ENCODE measurements at regions of chr20 and their contacts with region 1.

Region 1: GRCh38 chr20:63739130-63740069 is at the start of gene SLC2A4RG:
- DNase-seq: peak; percentile 89
- total RNA-seq, gene SLC2A4RG: 67.8 TPM

Region 2: DNA sequence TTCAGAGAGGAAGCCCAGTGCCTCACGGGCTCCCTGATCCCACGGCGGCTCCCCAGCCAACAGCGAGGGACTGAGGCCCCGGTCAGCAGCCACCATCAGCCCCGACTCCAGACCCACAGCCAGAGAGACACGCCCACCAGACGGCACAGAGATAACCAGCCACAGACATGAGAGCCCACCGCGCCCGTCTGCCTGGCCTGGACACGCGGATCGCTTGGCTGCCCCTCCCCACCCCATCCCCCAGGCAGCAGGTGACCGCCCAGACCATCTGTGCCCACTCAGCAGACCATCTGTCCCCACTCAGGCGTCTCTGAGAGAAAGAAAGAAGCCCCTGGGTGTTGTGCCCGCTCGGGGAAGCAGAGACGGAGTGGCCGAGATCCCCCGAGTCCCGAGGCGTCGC is 322.8 kb before region 1 on chr20:
- intact Hi-C with region 1: no loop called
- DNase-seq: no peak

Region 3: DNA sequence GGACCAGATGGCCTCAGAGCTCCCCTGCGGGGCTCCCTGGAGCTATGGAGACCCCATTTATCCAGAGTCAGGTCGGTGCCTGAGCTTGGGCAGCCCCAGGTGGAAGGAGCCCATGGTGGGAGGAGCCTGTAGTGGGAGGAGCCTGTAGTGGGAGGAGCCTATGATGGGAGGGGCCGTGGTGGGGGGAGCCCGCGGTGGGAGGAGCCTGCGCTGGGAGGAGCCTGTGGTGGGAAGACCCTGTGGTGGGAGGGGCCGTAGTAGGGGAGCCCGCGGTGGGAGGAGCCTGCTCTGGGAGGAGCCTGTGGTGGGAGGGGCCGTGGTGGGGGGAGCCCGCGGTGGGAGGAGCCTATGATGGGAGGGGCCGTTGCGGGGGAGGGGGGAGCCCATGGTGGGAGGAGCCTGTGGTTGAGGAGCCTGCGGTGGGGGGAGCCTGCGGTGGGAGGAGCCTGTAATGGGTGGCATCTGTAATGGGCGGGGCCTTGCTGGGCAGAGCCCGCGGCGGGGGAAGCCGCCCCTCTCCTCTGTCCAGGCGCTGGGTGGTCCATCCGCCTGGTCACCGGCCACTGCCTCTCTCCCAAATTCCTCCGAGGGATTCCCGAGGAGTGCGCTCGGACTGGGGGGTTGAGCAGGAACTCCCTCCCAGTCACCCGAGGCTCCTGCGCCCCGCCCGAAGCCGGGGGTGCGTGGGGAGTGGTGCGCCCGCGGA is 186.0 kb before region 1 on chr20:
- intact Hi-C with region 1: no loop called
- DNase-seq: peak; percentile 89

Region 4: DNA sequence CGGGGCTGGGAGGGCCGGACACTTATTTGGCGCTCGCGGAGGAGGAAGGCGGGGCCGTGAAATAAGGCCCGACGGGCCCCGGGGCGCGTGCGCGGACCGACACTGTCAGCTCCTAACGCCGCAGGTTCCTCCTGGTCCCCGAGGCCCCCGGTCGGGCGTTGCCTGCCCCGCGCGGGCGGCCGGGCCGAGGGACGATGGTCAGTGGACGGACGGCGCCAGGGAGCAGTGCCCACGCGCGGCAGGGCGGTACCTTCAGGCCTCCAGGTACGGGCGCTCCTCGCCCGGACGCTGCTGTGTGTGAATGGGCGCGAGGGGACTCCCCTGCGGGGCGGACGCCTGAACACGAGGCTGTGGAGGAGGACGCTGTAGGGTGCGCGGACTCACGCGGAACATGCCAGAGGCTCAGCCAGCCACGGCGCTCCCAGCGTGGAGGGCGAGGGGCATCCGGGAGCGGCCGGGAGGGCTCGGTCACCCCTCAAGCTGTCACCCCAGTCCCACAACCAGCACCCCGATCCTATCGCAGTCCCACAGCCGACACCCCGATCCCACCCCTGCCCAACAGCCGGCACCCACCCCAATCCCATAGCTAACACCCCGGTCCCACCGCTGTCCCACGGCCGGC is 112.2 kb before region 1 on chr20:
- intact Hi-C with region 1: loop called (anchors 5 kb)
- DNase-seq: peak; percentile 97

Region 5: DNA sequence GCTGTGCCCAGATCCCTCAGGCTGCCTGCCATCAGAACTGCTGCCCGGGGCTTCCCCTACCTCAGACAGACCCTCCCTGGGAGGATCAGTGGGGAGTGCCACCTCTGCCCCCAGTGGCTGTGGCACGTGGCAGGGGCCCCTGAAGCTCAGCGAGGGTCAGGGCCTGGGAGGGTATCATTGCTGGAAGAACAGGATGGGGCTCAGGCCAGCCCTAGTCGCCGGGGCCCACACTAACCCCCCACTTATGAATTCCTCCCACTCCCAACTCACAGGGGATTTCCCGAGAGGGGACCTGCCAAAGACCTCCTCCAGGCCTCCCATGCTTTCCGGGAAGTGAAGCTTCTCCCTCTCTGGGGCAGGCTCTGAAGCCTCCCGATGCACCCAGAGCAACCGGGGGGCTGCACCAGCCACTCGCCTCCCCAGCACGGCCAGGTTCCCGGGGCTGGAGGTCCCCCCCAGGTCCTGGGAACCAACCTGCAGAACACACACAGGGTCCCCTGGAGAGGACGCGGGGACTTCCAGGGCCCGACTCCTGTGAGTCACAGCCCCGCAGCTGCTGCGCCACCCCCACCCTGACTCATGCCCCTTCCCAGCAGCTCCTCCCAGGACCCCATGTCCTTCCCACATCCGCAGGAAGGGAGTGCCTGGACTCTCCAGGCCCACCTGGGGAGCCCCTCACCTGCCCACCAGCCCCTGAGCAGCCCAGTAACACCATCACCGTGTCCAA is 40.5 kb before region 1 on chr20:
- intact Hi-C with region 1: loop called (anchors 5 kb)
- DNase-seq: peak; percentile 80